ENCODE measurements at regions of chr9 and their contacts with region 1.

Region 1: DNA sequence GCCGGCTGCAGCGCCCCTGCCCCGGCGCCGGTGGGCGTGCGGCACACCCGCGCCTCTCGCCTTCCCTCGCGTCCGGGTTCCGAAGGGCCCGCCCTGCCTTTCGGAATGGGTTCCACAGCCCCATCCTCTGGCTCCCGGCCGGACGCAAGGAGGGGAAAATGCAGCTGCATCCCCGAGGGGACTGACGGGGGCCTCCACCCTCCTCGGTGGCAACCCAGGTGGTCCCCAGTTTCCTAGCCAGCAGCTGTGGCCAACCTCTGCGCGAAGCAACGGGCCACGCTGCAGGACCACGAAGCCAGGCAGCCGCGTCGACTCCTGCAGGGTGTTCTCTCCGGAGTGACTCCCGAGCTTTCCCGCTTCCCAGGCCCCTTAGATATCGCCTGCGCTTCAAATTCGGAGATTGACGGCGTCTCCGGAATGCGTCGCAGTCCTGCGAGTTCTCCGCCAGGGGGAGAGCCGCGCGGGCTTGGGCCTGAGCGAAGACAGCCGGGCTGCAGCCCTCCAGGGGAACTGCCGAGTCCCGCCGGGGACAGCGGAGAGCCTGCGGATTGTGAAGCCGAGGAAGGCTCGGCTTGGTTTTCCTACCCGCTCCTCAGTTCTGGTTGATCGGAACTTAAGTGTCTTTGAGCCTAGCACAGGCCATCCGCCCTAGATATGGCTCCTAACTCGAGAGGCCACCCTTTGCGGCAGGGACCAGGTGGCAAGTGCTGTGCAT is 582 bp upstream of the APBA1 start:
- DNase-seq: peak; percentile 76
- ATAC-seq: peak; percentile 95
- H3K4me3 Mint-ChIP-seq: peak overlapping the region; percentile 67
- H3K27ac Mint-ChIP-seq: no peak overlapping the region
- H3K4me1 Mint-ChIP-seq: peaks cover 9% of the 10 kb centered on the region
- H3K27me3 Mint-ChIP-seq: peaks cover 26% of the 10 kb centered on the region
- CTCF ChIP-seq: peak; percentile 92

Region 2: GRCh38 chr9:69660304-69660703 is 12.4 kb before region 1 on chr9:
- CTCF ChIA-PET with region 1: interaction called, 13 read pairs
- POLR2A ChIA-PET with region 1: no interaction called
- intact Hi-C with region 1: no loop called
- DNase-seq: no peak
- ATAC-seq: no peak
- H3K4me3 Mint-ChIP-seq: no peak overlapping the region
- H3K27ac Mint-ChIP-seq: no peak overlapping the region
- H3K4me1 Mint-ChIP-seq: no peaks in the 10 kb centered on the region
- H3K27me3 Mint-ChIP-seq: peaks cover 27% of the 10 kb centered on the region
- CTCF ChIP-seq: no peak

Region 3: GRCh38 chr9:69759421-69760277 is 86.9 kb after region 1 on chr9 and contains the start of gene PTAR1:
- CTCF ChIA-PET with region 1: interaction called, 6 read pairs
- POLR2A ChIA-PET with region 1: interaction called, 5 read pairs
- intact Hi-C with region 1: loop called (anchors 10 kb)
- DNase-seq: peak; percentile 93
- ATAC-seq: peak; percentile 91
- H3K4me3 Mint-ChIP-seq: peak within 1 kb of the TSS; percentile 97
- H3K27ac Mint-ChIP-seq: peak within 1 kb of the TSS; percentile 94
- H3K4me1 Mint-ChIP-seq: peaks cover 29% of the 10 kb centered on the region
- H3K27me3 Mint-ChIP-seq: no peaks in the 10 kb centered on the region
- CTCF ChIP-seq: no peak
- total RNA-seq, gene PTAR1: 38.2 to 42.7 TPM

Region 4: GRCh38 chr9:69822091-69822750 is 149.5 kb after region 1 on chr9:
- CTCF ChIA-PET with region 1: no interaction called
- POLR2A ChIA-PET with region 1: no interaction called
- intact Hi-C with region 1: no loop called
- DNase-seq: no peak
- ATAC-seq: peak; percentile 52
- H3K4me3 Mint-ChIP-seq: no peak overlapping the region
- H3K27ac Mint-ChIP-seq: no peak overlapping the region
- H3K4me1 Mint-ChIP-seq: peaks cover 32% of the 10 kb centered on the region
- H3K27me3 Mint-ChIP-seq: peaks cover 18% of the 10 kb centered on the region
- CTCF ChIP-seq: no peak

Measured in activated CD8-positive, alpha-beta T cell treated with anti-CD3 and anti-CD28 coated beads for 36 hours (primary cell).